Activated CD4-positive, alpha-beta T cell treated with anti-CD3 and anti-CD28 coated beads for 36 hours (primary cell): ENCODE measurements at regions of chr17 and their contacts with region 1.

Region 1: GRCh38 chr17:48406936-48407567 is 23.0 kb downstream of the SKAP1 start:
- DNase-seq: no peak
- ATAC-seq: peak; percentile 40
- H3K4me3 Mint-ChIP-seq: peak overlapping the region; percentile 33
- H3K27ac Mint-ChIP-seq: peak overlapping the region; percentile 82
- H3K4me1 Mint-ChIP-seq: peaks cover 61% of the 10 kb centered on the region
- H3K27me3 Mint-ChIP-seq: no peaks in the 10 kb centered on the region

Region 2: DNA sequence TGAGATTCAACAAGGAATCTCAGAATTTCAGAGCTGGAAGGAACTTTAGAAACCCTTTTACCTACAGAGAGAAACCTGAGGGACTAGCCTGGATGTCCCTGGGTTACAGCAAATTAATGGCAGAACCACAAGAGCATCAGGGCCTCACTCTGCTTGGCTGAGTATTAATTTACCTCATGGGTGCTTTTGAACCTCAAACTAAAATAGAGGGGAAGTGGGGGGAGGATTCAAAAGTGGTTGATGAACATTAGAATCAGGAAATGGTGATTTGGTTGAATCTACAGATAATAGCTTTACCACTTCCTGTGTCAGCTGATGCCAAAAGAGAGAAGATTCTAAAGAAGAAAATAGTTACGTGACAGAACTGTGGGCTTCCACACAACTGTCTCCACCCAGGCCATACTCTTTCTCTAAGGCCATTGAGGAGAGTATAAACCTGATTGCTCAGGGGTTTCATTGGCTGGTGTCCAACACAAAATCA is 34.2 kb after region 1 on chr17:
- CTCF ChIA-PET with region 1: no interaction called
- POLR2A ChIA-PET with region 1: no interaction called
- intact Hi-C with region 1: loop called in 1 of 2 experiments (anchors 5 kb)
- DNase-seq: peak; percentile 35
- ATAC-seq: peak; percentile 55
- H3K4me3 Mint-ChIP-seq: peak overlapping the region; percentile 31
- H3K27ac Mint-ChIP-seq: peak overlapping the region; percentile 91
- H3K4me1 Mint-ChIP-seq: peaks cover 95% of the 10 kb centered on the region
- H3K27me3 Mint-ChIP-seq: no peaks in the 10 kb centered on the region